H1 (cell line): ENCODE measurements at regions of chr18 and their contacts with region 1.

Region 1: GRCh38 chr18:51621113-51621863 is 423.8 kb upstream of the MEX3C start:
- DNase-seq: peak; percentile 33 to 88
- H3K4me3 ChIP-seq: peak overlapping the region in 1 of 4 experiments; percentile 13; a peak in 1 of 8 replicates
- H3K27ac ChIP-seq: no peak overlapping the region
- H3K4me1 ChIP-seq: peaks cover 0 to 11% (median 8%) of the 10 kb centered on the region in 4 experiments; a peak in 5 of 7 replicates
- H3K27me3 ChIP-seq: no peaks in the 10 kb centered on the region
- CTCF ChIP-seq: peak; percentile 77 to 91 (median 82)
- EP300 ChIP-seq: no peak
- POLR2A ChIP-seq: no peak
- RAD21 ChIP-seq: peak; percentile 91 to 95

Region 2: GRCh38 chr18:51610481-51610880 is 10.8 kb before region 1 on chr18:
- CTCF ChIA-PET with region 1: interaction called, 12 read pairs
- POLR2A ChIA-PET with region 1: no interaction called
- DNase-seq: no peak
- H3K4me3 ChIP-seq: no peak overlapping the region
- H3K27ac ChIP-seq: no peak overlapping the region
- H3K4me1 ChIP-seq: no peaks in the 10 kb centered on the region
- H3K27me3 ChIP-seq: no peaks in the 10 kb centered on the region
- CTCF ChIP-seq: no peak
- EP300 ChIP-seq: no peak
- POLR2A ChIP-seq: no peak
- RAD21 ChIP-seq: no peak

Region 3: GRCh38 chr18:51639541-51639940 is 18.3 kb after region 1 on chr18:
- CTCF ChIA-PET with region 1: interaction called, 16 read pairs
- POLR2A ChIA-PET with region 1: interaction called, 4 read pairs
- DNase-seq: no peak
- H3K4me3 ChIP-seq: no peak overlapping the region
- H3K27ac ChIP-seq: no peak overlapping the region
- H3K4me1 ChIP-seq: no peaks in the 10 kb centered on the region
- H3K27me3 ChIP-seq: no peaks in the 10 kb centered on the region
- CTCF ChIP-seq: no peak
- EP300 ChIP-seq: no peak
- POLR2A ChIP-seq: no peak
- RAD21 ChIP-seq: no peak

Region 4: DNA sequence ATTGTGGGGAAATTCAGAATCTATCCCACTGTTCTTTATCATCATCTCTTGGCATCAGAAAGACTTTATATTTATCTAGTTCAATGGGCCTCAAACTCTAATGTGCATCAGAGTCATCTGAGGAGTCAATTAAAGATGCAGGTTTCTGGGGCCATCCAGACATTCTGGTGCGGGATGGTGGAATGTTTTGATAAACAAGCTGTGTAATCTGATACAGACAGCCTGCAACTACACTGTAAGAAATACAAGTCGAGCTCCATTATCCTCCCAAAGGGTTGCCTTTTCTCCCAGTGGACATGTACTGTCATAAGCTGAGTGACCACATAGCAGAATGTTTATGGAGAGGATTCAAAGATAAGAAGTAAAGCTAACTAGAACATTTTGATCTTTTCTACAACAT is 203.5 kb after region 1 on chr18:
- CTCF ChIA-PET with region 1: no interaction called
- POLR2A ChIA-PET with region 1: no interaction called
- DNase-seq: no peak
- H3K4me3 ChIP-seq: no peak overlapping the region
- H3K27ac ChIP-seq: no peak overlapping the region
- H3K4me1 ChIP-seq: no peaks in the 10 kb centered on the region
- H3K27me3 ChIP-seq: no peaks in the 10 kb centered on the region
- CTCF ChIP-seq: no peak
- EP300 ChIP-seq: no peak
- POLR2A ChIP-seq: no peak
- RAD21 ChIP-seq: no peak